ENCODE measurements at regions of chr11 and their contacts with region 1.

Region 1: DNA sequence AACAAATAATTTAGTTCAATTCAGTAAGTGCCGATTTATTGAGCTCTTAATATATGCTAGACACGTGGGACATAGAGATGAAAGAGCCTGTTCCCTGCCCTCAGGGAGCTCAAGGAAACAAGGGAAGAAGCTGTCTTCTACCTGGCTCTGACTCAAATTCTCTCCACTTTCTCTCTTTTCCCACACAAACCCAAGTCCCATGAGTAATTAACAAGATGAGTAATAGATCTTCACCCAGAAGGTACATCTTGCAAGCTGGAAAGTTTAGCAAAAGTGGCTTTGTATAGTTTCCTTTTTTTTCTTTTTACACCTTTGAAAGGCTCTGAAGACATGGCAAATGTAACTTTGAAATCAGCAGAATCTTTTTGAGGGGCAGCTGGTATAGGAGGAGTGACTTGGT is 48.2 kb upstream of the CHST1 start:
- DNase-seq: no peak

Region 2: DNA sequence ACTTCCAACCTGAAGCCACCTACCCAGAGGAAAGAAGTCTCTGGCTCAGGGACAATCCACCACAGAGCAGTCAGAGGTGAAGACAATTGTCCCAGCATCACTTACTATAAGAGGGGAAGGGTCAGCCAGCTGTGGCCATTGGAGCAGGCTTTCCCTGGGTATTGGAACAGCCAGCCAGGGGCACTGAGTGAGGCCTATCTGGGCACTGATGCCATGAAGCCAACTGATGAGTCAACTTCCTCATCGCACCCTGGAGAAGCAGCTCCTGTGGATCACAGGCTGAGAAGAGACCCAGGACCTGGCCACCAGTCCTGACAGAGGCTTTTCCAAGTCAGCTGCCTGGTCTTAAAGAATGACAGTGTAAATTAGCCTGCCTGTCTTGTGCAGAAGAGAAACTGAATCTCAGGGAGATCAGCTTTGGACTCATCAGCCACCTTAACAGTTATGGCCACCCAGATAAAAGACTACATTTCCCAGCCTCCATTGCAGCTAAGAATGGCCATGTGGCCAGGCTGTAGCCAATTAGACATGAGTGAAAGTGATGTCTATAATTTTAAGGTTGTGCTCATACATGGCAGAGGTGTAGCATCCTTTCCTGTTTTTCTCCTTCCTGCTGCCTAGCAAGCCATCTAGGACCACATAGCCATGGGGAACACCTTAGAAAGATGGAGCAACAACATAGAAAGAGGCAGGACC is 67.2 kb before region 1 on chr11:
- intact Hi-C with region 1: no loop called
- DNase-seq: no peak

Region 3: GRCh38 chr11:45754261-45754709 is 40.7 kb after region 1 on chr11:
- intact Hi-C with region 1: loop called in 1 of 2 experiments (anchors 1 kb)
- DNase-seq: no peak